Sciatic nerve (tissue), 2 donors: ENCODE measurements at regions of chr10 and their contacts with region 1.

Region 1: DNA sequence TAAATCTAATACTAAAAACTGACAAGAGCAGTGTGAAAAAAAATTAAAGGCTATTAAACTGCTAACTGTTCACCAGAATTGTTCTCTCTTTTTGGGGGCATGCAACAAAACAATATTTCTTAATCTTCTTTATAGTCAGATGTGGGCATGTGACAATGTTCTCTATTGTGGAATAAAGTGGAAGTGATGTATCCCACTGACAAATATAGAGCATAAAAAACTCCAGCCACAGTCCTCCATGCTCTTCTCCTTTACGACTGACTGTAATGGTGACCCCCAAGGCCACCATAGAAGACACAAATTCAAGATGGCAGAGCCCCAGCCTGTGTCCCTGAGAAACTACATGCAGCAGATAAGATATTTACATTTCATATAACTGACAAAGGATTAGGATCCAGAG is 11.6 kb upstream of the CCDC6 start:
- DNase-seq: no peak
- ATAC-seq: no peak

Region 2: GRCh38 chr10:58950618-58951017 is 967.3 kb before region 1 on chr10:
- intact Hi-C with region 1: no loop called
- DNase-seq: no peak
- ATAC-seq: no peak

Region 3: GRCh38 chr10:59079386-59080226 is 838.3 kb before region 1 on chr10:
- intact Hi-C with region 1: loop called (anchors 5 kb)
- DNase-seq: no peak
- ATAC-seq: peak; percentile 82